A673 (cell line): ENCODE measurements at regions of chr9 and their contacts with region 1.

Region 1: DNA sequence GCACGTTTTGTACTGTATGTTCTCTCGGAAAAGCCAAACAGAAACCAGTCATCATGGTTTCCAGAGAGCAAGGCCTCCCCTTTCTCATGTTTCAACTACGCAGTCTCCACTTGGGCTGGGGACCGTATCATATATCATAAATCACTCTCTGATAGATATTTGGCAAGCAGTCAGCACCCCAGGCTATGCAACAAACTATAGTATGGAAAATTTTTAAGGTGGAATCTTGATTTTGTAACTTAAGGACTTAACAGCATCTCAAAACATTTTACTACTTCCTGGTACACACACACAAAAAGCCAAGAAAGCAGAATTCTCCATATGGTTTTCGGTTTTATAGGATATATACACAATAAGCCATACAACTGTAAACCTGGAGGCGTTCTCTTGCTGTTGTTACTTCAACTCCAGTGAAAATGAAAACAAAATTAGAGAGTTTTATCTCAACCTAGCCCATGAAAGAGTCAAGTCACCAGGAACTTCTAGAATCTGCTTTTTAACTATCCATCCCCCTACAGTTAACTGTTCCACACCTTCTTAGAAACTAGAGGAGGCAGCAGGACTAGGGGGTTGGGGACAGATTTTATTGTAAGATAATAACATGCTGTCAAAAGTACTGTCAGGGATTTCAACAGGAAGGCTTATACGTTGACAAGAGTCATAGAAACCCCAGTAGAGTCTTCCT is 283.4 kb downstream of the NFIB start:
- DNase-seq: peak; percentile 87
- H3K4me3 ChIP-seq: peak overlapping the region; percentile 31
- H3K27ac ChIP-seq: peak overlapping the region; percentile 89
- H3K4me1 ChIP-seq: peaks cover 45% of the 10 kb centered on the region
- H3K27me3 ChIP-seq: no peaks in the 10 kb centered on the region
- CTCF ChIP-seq: no peak

Region 2: GRCh38 chr9:14096258-14096922 is 65.9 kb after region 1 on chr9:
- CTCF ChIA-PET with region 1: no interaction called
- POLR2A ChIA-PET with region 1: no interaction called
- intact Hi-C with region 1: loop called (anchors 2 kb)
- DNase-seq: peak; percentile 90
- H3K4me3 ChIP-seq: peak overlapping the region; percentile 25
- H3K27ac ChIP-seq: peak overlapping the region; percentile 95
- H3K4me1 ChIP-seq: peaks cover 47% of the 10 kb centered on the region
- H3K27me3 ChIP-seq: no peaks in the 10 kb centered on the region
- CTCF ChIP-seq: no peak